Heart left ventricle (tissue), 16 donors: ENCODE measurements at regions of chr4 and their contacts with region 1.

Region 1: DNA sequence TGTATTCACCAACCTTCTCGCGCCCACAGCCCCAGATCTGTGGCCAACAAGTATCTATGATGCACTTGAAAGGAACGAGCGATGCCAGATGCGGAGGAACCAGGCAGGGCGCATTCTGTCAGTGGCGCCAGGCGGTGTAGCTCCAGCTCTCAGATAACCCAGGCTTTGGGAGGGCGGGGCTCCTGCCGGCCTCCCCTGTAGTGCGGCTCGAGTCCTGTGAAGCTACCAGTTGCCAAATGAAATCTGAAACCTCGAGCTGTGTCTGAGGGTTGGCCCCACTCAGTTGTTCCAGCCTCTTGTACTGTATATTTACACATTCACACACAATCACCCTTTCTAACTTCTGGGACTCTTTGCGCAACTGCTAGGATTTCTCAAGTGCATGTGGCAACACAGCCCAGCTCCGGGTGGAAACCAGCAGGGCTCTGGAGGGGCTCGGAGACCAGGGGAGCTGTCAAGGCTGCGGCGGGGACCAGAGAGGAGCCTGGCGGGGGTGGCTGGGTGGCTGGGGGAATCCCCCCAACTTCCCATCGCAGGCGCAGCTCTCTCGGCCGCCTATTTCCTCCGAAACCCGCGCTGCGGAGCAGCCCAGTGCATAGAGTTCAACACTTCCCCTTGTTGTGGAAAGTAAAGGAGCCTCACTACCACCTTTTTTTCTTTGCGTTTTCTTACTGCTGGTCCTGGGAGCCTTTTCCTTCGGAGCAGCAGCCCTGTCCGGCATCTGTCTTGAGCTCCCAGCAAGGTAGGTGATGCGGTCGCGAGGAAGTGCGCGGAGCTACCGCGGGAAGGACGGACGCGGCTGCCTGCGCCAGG is at the start of gene ARHGAP24:
- DNase-seq: peak; percentile 83 to 92 (median 90)
- ATAC-seq: peak; percentile 96 to 98 (median 98)
- H3K4me3 ChIP-seq: peak within 1 kb of the TSS; percentile 2 to 85 (median 71)
- H3K27ac ChIP-seq: peak within 1 kb of the TSS; percentile 47 to 90 (median 80)
- H3K4me1 ChIP-seq: peaks cover 0 to 28% (median 7%) of the 10 kb centered on the region in 12 donors
- H3K27me3 ChIP-seq: no peaks in the 10 kb centered on the region
- CTCF ChIP-seq: peak in 1 of 12 donors; percentile 13
- POLR2A ChIP-seq: peak in 1 of 2 donors; percentile 23
- total RNA-seq, gene ARHGAP24: 14.9 to 36.9 (median 25.1) TPM

Region 2: GRCh38 chr4:85399270-85399669 is 75.8 kb before region 1 on chr4:
- intact Hi-C with region 1: loop called in 1 of 10 experiments (anchors 2 kb)
- DNase-seq: no peak
- ATAC-seq: no peak
- H3K4me3 ChIP-seq: no peak overlapping the region
- H3K27ac ChIP-seq: peak overlapping the region in 1 of 12 donors; percentile 44
- H3K4me1 ChIP-seq: peaks cover 0 to 16% (median 5%) of the 10 kb centered on the region in 12 donors
- H3K27me3 ChIP-seq: no peaks in the 10 kb centered on the region
- CTCF ChIP-seq: no peak
- POLR2A ChIP-seq: no peak

Region 3: DNA sequence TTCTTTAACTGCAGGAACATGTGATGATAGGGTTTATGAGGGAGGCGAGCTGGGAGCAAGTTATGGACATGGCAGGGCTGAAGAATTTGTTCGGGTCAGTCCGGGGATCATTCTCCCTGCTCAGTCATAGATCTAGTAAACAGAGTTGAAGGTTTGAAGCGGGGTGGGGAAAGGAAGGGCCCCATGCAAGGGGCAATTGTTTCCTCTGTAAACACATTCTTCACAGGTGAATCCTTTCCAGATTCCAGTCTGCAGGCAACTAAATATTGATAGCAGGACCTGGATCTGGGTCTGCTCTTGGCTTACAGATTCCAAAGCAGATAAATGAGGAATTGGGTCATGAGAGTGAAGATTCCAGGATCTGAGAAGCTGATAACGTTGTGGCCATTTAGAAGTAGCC is 44.3 kb before region 1 on chr4:
- intact Hi-C with region 1: loop called in 1 of 10 experiments (anchors 5 kb)
- DNase-seq: no peak
- ATAC-seq: no peak
- H3K4me3 ChIP-seq: no peak overlapping the region
- H3K27ac ChIP-seq: no peak overlapping the region
- H3K4me1 ChIP-seq: peaks cover 0 to 15% (median 0%) of the 10 kb centered on the region in 12 donors
- H3K27me3 ChIP-seq: no peaks in the 10 kb centered on the region
- CTCF ChIP-seq: no peak
- POLR2A ChIP-seq: no peak

Region 4: GRCh38 chr4:85734424-85734831 is 259.4 kb after region 1 on chr4:
- intact Hi-C with region 1: no loop called
- DNase-seq: no peak
- ATAC-seq: peak; percentile 49 to 84 (median 72)
- H3K4me3 ChIP-seq: no peak overlapping the region
- H3K27ac ChIP-seq: peak overlapping the region in 9 of 12 donors; percentile 32 to 73 (median 45)
- H3K4me1 ChIP-seq: peaks cover 3 to 59% (median 16%) of the 10 kb centered on the region in 12 donors
- H3K27me3 ChIP-seq: no peaks in the 10 kb centered on the region
- CTCF ChIP-seq: no peak
- POLR2A ChIP-seq: no peak

Region 5: GRCh38 chr4:85842540-85842939 is 367.5 kb after region 1 on chr4:
- intact Hi-C with region 1: no loop called
- DNase-seq: peak in 3 of 5 donors; percentile 24 to 33 (median 24)
- ATAC-seq: peak; percentile 37 to 87 (median 72)
- H3K4me3 ChIP-seq: no peak overlapping the region
- H3K27ac ChIP-seq: peak overlapping the region in 4 of 12 donors; percentile 14 to 77 (median 39)
- H3K4me1 ChIP-seq: peaks cover 0 to 10% (median 0%) of the 10 kb centered on the region in 12 donors
- H3K27me3 ChIP-seq: no peaks in the 10 kb centered on the region
- CTCF ChIP-seq: no peak
- POLR2A ChIP-seq: no peak